Activated CD8-positive, alpha-beta T cell treated with anti-CD3 and anti-CD28 coated beads for 36 hours (primary cell): ENCODE measurements at regions of chr4 and their contacts with region 1.

Region 1: DNA sequence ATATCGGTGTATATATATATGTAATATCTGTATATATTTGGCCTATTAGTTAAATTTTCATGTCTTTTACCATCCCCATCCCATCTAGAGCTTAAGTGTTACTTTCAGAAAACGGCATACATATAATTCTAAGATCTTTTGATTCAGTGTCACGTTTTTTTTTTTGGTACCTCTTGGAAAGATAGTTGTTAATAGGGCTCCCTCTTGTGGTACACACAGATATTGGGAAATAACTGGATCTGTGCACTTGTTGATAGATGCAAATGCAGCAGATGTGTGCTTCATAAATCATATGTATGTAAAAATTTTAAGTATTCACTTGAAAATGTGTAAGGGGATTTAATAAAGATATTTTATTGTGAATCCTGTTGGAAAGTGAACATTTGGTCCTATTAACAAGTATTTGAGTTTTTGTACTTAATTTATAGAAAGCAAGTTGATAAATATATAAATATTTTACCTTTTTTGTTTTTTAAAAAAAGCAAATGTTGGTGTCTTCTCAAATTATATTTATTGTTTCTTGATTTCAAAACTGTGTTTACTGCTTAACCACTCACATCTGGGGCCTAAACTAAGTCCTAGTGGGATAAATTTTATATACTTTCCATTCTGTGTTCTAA is 74.7 kb downstream of the PAQR3 start:
- DNase-seq: peak; percentile 29
- ATAC-seq: no peak
- H3K4me3 Mint-ChIP-seq: no peak overlapping the region
- H3K27ac Mint-ChIP-seq: no peak overlapping the region
- H3K4me1 Mint-ChIP-seq: peaks cover 8% of the 10 kb centered on the region
- H3K27me3 Mint-ChIP-seq: no peaks in the 10 kb centered on the region
- CTCF ChIP-seq: peak; percentile 76

Region 2: GRCh38 chr4:78612398-78613178 is 251.9 kb before region 1 on chr4:
- CTCF ChIA-PET with region 1: interaction called, 18 read pairs
- POLR2A ChIA-PET with region 1: interaction called, 3 read pairs
- intact Hi-C with region 1: loop called (anchors 1 kb)
- DNase-seq: peak; percentile 30
- ATAC-seq: peak; percentile 37
- H3K4me3 Mint-ChIP-seq: no peak overlapping the region
- H3K27ac Mint-ChIP-seq: no peak overlapping the region
- H3K4me1 Mint-ChIP-seq: peaks cover 41% of the 10 kb centered on the region
- H3K27me3 Mint-ChIP-seq: no peaks in the 10 kb centered on the region
- CTCF ChIP-seq: peak; percentile 54

Region 3: DNA sequence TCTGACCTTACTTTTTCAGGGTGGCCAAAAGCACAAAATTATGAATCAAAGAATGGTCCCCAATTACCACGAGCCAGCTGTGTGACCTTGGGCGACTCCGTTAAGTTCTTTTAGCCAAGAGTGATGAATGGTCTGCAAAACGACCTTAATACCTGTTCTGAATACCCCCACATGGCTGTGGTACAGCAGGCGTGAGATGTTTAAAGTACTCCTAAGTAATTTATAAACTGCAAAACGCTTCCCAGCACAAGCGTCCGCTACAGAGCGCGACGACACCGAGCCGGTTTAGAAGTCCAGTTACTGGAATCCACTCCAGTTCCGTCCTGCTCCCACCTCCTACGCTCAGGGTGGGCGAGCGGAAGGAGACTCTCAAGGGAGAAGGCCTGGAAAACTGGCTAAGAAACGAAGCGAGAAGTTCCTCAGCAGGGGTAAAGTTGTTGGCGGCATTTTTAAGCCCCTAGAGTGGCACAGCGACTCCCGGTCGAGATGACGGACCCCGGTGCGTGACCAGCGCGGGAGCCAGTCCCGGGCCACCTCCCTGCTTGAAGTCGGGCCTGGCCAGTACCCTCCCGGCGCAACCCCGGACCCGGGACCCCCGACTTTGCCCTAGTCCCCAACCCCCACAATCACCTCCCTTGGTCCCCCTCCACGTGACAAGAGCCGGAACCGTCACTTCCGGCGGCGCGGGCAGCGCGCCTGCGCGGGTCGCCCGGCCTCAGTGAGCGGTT is 89.0 kb before region 1 on chr4:
- CTCF ChIA-PET with region 1: no interaction called
- POLR2A ChIA-PET with region 1: no interaction called
- intact Hi-C with region 1: loop called (anchors 10 kb)
- DNase-seq: peak; percentile 84
- ATAC-seq: peak; percentile 68
- H3K4me3 Mint-ChIP-seq: peak overlapping the region; percentile 85
- H3K27ac Mint-ChIP-seq: peak overlapping the region; percentile 97
- H3K4me1 Mint-ChIP-seq: peaks cover 31% of the 10 kb centered on the region
- H3K27me3 Mint-ChIP-seq: no peaks in the 10 kb centered on the region
- CTCF ChIP-seq: no peak